T-cell (primary cell): ENCODE measurements at regions of chr3 and their contacts with region 1.

Region 1: DNA sequence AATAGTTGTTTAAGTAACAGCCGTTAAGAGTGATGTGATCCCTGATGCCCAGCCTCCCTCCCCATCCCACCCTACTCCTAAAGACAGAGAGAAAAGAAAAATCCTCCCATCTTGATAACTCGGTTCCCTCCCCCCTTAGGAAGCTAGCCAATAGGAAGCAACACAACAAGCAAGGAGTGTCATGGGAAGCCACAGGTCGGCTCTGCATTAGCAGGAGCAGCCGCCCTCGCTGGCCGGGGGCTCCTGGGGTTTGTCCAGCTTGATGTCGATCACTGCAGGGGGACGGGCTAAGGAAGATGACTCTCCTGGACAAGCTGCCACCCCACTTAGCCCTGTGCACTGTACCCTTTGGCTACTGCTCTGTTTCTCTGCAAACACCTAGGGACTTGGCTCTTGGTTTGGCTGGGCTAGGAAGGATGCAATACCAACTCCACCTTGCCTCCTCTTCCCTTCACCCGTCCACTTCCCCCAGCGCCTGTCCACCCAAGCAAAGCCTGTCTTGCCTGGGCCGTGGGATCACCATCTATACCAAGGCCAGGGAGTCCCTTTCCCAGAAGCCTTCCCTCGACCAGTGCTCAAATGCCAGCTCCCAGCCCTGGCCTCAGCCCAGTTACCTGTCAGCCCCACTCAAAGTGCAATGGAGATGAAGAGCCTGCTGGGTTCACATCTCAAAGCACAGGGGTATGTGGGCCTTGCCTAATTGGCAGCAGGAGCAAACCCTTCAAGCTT is 23.1 kb downstream of the SRPRB start:
- DNase-seq: no peak
- ATAC-seq: no peak
- H3K4me3 ChIP-seq: no peak overlapping the region
- H3K4me3 Mint-ChIP-seq: no peak overlapping the region
- H3K27ac ChIP-seq: no peak overlapping the region
- H3K27ac Mint-ChIP-seq: no peak overlapping the region
- H3K4me1 ChIP-seq: no peaks in the 10 kb centered on the region
- H3K4me1 Mint-ChIP-seq: no peaks in the 10 kb centered on the region
- H3K27me3 ChIP-seq: peaks cover 0 to 9% of the 10 kb centered on the region in 2 experiments
- H3K27me3 Mint-ChIP-seq: peaks cover 3 to 4% of the 10 kb centered on the region in 2 donors

Region 2: GRCh38 chr3:133595341-133595740 is 233.4 kb before region 1 on chr3:
- CTCF ChIA-PET with region 1: no interaction called
- POLR2A ChIA-PET with region 1: interaction called in 1 of 2 experiments, 11 read pairs
- DNase-seq: no peak
- ATAC-seq: peak in 3 of 4 experiments; percentile 15 to 60 (median 51)
- H3K4me3 ChIP-seq: no peak overlapping the region
- H3K4me3 Mint-ChIP-seq: no peak overlapping the region
- H3K27ac ChIP-seq: no peak overlapping the region
- H3K27ac Mint-ChIP-seq: no peak overlapping the region
- H3K4me1 ChIP-seq: no peaks in the 10 kb centered on the region
- H3K4me1 Mint-ChIP-seq: peaks cover 5 to 8% (median 7%) of the 10 kb centered on the region in 3 donors
- H3K27me3 ChIP-seq: no peaks in the 10 kb centered on the region
- H3K27me3 Mint-ChIP-seq: no peaks in the 10 kb centered on the region

Region 3: GRCh38 chr3:133661454-133662277 is 167.1 kb before region 1 on chr3 and contains the start of gene TOPBP1:
- CTCF ChIA-PET with region 1: no interaction called
- POLR2A ChIA-PET with region 1: no interaction called
- DNase-seq: peak; percentile 68 to 91 (median 83)
- ATAC-seq: peak; percentile 88 to 94 (median 94)
- H3K4me3 ChIP-seq: peak within 1 kb of the TSS; percentile 95 to 97
- H3K4me3 Mint-ChIP-seq: peak within 1 kb of the TSS; percentile 98
- H3K27ac ChIP-seq: peak within 1 kb of the TSS; percentile 79
- H3K27ac Mint-ChIP-seq: peak within 1 kb of the TSS; percentile 95 to 98
- H3K4me1 ChIP-seq: peaks cover 15 to 31% of the 10 kb centered on the region in 2 experiments
- H3K4me1 Mint-ChIP-seq: peaks cover 44 to 50% (median 47%) of the 10 kb centered on the region in 3 donors
- H3K27me3 ChIP-seq: no peaks in the 10 kb centered on the region
- H3K27me3 Mint-ChIP-seq: no peaks in the 10 kb centered on the region
- total RNA-seq, gene TOPBP1: 27.8 to 37.8 (median 30.0) TPM

Region 4: DNA sequence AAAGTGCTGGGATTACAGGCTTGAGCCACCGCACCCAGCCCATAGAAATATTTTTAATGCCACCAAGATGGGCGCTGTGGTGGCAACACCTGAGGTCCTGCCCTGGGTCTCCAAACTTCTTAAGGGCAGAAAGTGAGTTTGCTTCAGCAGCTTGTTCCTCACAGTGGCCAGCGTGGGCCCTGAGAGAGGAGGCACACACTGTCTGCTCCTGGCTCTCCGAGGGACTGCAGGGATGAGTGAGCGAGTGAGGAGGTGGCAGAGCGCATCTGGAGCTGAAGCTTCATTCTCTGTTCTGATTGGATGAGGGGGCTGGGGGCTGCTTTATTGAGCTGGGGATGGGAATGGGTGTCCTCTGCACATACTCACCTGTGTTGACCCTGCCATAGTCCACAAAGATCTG is 124.6 kb after region 1 on chr3:
- CTCF ChIA-PET with region 1: interaction called in 1 of 2 experiments, 14 read pairs
- POLR2A ChIA-PET with region 1: no interaction called
- DNase-seq: no peak
- ATAC-seq: no peak
- H3K4me3 ChIP-seq: no peak overlapping the region
- H3K4me3 Mint-ChIP-seq: no peak overlapping the region
- H3K27ac ChIP-seq: no peak overlapping the region
- H3K27ac Mint-ChIP-seq: no peak overlapping the region
- H3K4me1 ChIP-seq: no peaks in the 10 kb centered on the region
- H3K4me1 Mint-ChIP-seq: no peaks in the 10 kb centered on the region
- H3K27me3 ChIP-seq: peaks cover 0 to 31% of the 10 kb centered on the region in 2 experiments
- H3K27me3 Mint-ChIP-seq: peaks cover 9% of the 10 kb centered on the region in 2 donors